A549 (cell line): ENCODE measurements at regions of chr16 and their contacts with region 1.

Region 1: DNA sequence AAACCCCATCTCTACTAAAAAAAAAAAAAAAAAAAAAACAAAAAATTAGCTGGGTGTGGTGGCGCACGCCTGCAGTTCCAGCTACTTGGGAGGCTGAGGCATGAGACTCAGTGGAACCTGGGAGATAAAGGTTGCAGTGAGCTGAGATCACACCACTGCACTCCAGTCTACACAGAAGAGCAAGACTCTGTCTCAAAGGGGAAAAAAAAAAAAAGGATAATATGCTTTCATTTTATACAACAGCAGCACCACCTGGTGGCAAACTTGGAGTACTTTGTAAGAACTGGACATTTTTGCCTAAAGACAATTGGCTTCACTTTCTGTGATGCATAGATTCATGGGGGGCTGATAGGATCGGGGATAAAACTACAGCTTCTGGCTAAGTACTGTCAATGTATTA is 8.5 kb downstream of the CHTF8 start:
- DNase-seq: peak; percentile 60 to 78
- ATAC-seq: peak; percentile 59 to 72; a peak in 5 of 6 replicates
- H3K4me3 ChIP-seq: no peak overlapping the region
- H3K27ac ChIP-seq: no peak overlapping the region
- H3K4me1 ChIP-seq: no peaks in the 10 kb centered on the region
- CTCF ChIP-seq: peak; percentile 81
- EP300 ChIP-seq: no peak
- POLR2A ChIP-seq: no peak
- RAD21 ChIP-seq: peak; percentile 90 to 91

Region 2: GRCh38 chr16:68528686-68529379 is 595.1 kb before region 1 on chr16:
- CTCF ChIA-PET with region 1: interaction called, 18 read pairs
- POLR2A ChIA-PET with region 1: no interaction called
- DNase-seq: peak; percentile 87 to 90
- ATAC-seq: peak; percentile 83 to 88
- H3K4me3 ChIP-seq: peak overlapping the region; percentile 14; the same call in 1 of the 3 replicates
- H3K27ac ChIP-seq: no peak overlapping the region
- H3K4me1 ChIP-seq: peaks cover 4% of the 10 kb centered on the region; the same call in 1 of the 3 replicates
- CTCF ChIP-seq: peak; percentile 95
- EP300 ChIP-seq: no peak
- POLR2A ChIP-seq: no peak
- RAD21 ChIP-seq: peak; percentile 95 to 96

Region 3: GRCh38 chr16:68860978-68861892 is 262.7 kb before region 1 on chr16:
- CTCF ChIA-PET with region 1: interaction called, 13 read pairs
- POLR2A ChIA-PET with region 1: no interaction called
- DNase-seq: no peak
- ATAC-seq: no peak
- H3K4me3 ChIP-seq: no peak overlapping the region
- H3K27ac ChIP-seq: no peak overlapping the region
- H3K4me1 ChIP-seq: no peaks in the 10 kb centered on the region
- CTCF ChIP-seq: no peak
- EP300 ChIP-seq: no peak
- POLR2A ChIP-seq: no peak
- RAD21 ChIP-seq: no peak

Region 4: GRCh38 chr16:68972720-68973119 is 151.2 kb before region 1 on chr16:
- CTCF ChIA-PET with region 1: interaction called, 47 read pairs
- POLR2A ChIA-PET with region 1: no interaction called
- DNase-seq: peak; percentile 45 to 71
- ATAC-seq: peak; percentile 95 to 97
- H3K4me3 ChIP-seq: no peak overlapping the region
- H3K27ac ChIP-seq: peak overlapping the region; percentile 12 to 62; a peak in 5 of 6 replicates
- H3K4me1 ChIP-seq: peaks cover 20% of the 10 kb centered on the region
- CTCF ChIP-seq: peak; percentile 34; the same call in 2 of the 3 replicates
- EP300 ChIP-seq: no peak
- POLR2A ChIP-seq: no peak
- RAD21 ChIP-seq: peak; percentile 52 to 64

Region 5: GRCh38 chr16:69073161-69073669 is 50.7 kb before region 1 on chr16:
- CTCF ChIA-PET with region 1: interaction called, 11 read pairs
- POLR2A ChIA-PET with region 1: no interaction called
- DNase-seq: peak; percentile 64 to 87
- ATAC-seq: peak; percentile 94 to 96
- H3K4me3 ChIP-seq: 0 out of 3 replicates have a peak overlapping the region, but pooled peaks have one; percentile 1
- H3K27ac ChIP-seq: peak overlapping the region; percentile 89
- H3K4me1 ChIP-seq: peaks cover 66% of the 10 kb centered on the region
- CTCF ChIP-seq: no peak; the same call in 2 of the 3 replicates
- EP300 ChIP-seq: peak; percentile 80 to 89; a peak in 3 of 5 replicates
- POLR2A ChIP-seq: no peak
- RAD21 ChIP-seq: peak; percentile 25 to 63; a peak in 4 of 5 replicates

Region 6: GRCh38 chr16:69105489-69106361 is 18.2 kb before region 1 on chr16 and contains the start of gene HAS3:
- CTCF ChIA-PET with region 1: interaction called, 111 read pairs
- POLR2A ChIA-PET with region 1: interaction called, 4 read pairs
- DNase-seq: peak; percentile 81 to 84
- ATAC-seq: peak; percentile 80 to 85
- H3K4me3 ChIP-seq: peak within 1 kb of the TSS; percentile 91
- H3K27ac ChIP-seq: peak within 1 kb of the TSS; percentile 88 to 94
- H3K4me1 ChIP-seq: peaks cover 28% of the 10 kb centered on the region
- CTCF ChIP-seq: peak; percentile 68
- EP300 ChIP-seq: no peak
- POLR2A ChIP-seq: peak; percentile 98
- RAD21 ChIP-seq: peak; percentile 89 to 90
- polyA plus RNA-seq, gene HAS3: 9.1 and 11.1 TPM in 2 replicates

Region 7: DNA sequence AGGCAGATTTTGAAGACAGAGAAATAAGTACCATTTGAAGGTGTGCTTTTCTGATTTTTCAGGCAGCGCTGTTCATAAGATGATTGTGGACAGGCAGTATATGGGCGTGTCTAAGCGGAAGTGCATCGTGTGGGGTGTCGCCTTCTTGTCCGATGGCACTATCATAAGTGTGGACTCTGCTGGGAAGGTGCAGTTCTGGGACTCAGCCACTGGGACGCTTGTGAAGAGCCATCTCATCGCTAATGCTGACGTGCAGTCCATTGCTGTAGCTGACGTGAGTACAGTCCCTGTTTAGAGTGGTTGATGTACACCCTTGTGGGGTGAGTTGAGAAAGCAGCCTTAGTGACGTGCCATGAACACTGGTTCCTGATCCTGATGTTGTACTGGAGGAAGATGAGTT is 19.2 kb after region 1 on chr16:
- CTCF ChIA-PET with region 1: no interaction called
- POLR2A ChIA-PET with region 1: no interaction called
- DNase-seq: peak; percentile 40 to 75
- ATAC-seq: peak; percentile 96
- H3K4me3 ChIP-seq: no peak overlapping the region
- H3K27ac ChIP-seq: no peak overlapping the region
- H3K4me1 ChIP-seq: 0 out of 3 replicates have a peak, but pooled peaks cover 3% of the 10 kb centered on the region
- CTCF ChIP-seq: no peak
- EP300 ChIP-seq: no peak
- POLR2A ChIP-seq: no peak
- RAD21 ChIP-seq: no peak